Endothelial cell of umbilical vein (primary cell): ENCODE measurements at regions of chr1 and their contacts with region 1.

Region 1: GRCh38 chr1:186985889-186986491 is 157.2 kb downstream of the PLA2G4A start:
- DNase-seq: peak; percentile 90
- H3K4me3 ChIP-seq: no peak overlapping the region
- H3K27ac ChIP-seq: peak overlapping the region; percentile 76
- H3K4me1 ChIP-seq: peaks cover 16% of the 10 kb centered on the region
- H3K27me3 ChIP-seq: no peaks in the 10 kb centered on the region
- CTCF ChIP-seq: peak; percentile 45 to 48
- POLR2A ChIP-seq: no peak

Region 2: GRCh38 chr1:186482661-186483255 is 503.2 kb before region 1 on chr1:
- CTCF ChIA-PET with region 1: interaction called, 19 read pairs
- POLR2A ChIA-PET with region 1: no interaction called
- dilution Hi-C with region 1: no loop called
- intact Hi-C with region 1: loop called (anchors 1 kb)
- DNase-seq: peak; percentile 90
- H3K4me3 ChIP-seq: no peak overlapping the region
- H3K27ac ChIP-seq: peak overlapping the region; percentile 19
- H3K4me1 ChIP-seq: peaks cover 16% of the 10 kb centered on the region
- H3K27me3 ChIP-seq: no peaks in the 10 kb centered on the region
- CTCF ChIP-seq: peak; percentile 81 to 87
- POLR2A ChIP-seq: no peak

Region 3: GRCh38 chr1:186722711-186723309 is 263.2 kb before region 1 on chr1:
- CTCF ChIA-PET with region 1: interaction called, 15 read pairs
- POLR2A ChIA-PET with region 1: no interaction called
- dilution Hi-C with region 1: no loop called
- intact Hi-C with region 1: loop called (anchors 1 kb)
- DNase-seq: peak; percentile 52
- H3K4me3 ChIP-seq: no peak overlapping the region
- H3K27ac ChIP-seq: no peak overlapping the region
- H3K4me1 ChIP-seq: no peaks in the 10 kb centered on the region
- H3K27me3 ChIP-seq: no peaks in the 10 kb centered on the region
- CTCF ChIP-seq: peak; percentile 55 to 56
- POLR2A ChIP-seq: no peak

Region 4: DNA sequence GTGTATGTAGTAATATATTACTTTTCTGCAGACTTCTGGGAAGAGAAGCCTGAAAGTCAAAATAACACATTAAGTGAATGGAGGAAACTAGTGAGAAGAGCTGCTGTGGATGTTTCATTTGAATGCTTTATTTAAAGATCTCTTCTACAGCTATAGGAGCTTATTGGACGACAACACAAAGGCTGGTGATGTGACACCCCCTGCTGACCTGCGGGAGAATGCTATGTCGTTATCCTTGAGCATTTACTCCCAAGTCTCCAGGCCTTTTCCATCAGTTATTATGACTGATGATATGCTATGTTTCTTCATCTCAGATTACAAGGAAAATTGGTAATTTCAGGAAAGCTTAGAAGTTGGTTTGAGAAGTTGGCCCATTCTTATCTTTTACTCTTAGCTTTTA is 179.5 kb before region 1 on chr1:
- CTCF ChIA-PET with region 1: interaction called, 12 read pairs
- POLR2A ChIA-PET with region 1: no interaction called
- dilution Hi-C with region 1: no loop called
- intact Hi-C with region 1: no loop called
- DNase-seq: peak; percentile 73
- H3K4me3 ChIP-seq: no peak overlapping the region
- H3K27ac ChIP-seq: no peak overlapping the region
- H3K4me1 ChIP-seq: no peaks in the 10 kb centered on the region
- H3K27me3 ChIP-seq: no peaks in the 10 kb centered on the region
- CTCF ChIP-seq: peak; percentile 32 to 49
- POLR2A ChIP-seq: no peak

Region 5: DNA sequence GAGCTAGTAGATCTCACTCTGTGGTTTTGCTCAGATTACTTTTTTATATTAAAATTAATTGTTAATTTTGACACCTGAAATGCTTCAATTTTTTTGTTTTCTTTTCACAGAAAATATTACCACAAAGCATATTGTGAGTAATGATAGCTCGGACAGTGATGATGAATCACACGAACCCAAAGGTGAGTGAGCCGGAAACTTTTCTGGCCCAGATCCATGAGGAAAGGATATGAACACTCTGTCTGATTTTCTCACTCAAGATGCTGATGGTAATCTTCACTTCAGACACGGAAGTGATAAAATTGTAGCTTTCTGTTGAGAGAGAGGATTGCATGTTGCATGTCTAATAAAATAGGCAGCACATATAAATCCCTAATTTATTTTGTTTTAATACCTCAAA is 35.4 kb before region 1 on chr1:
- CTCF ChIA-PET with region 1: interaction called, 3 read pairs
- POLR2A ChIA-PET with region 1: no interaction called
- dilution Hi-C with region 1: no loop called
- intact Hi-C with region 1: loop called (anchors 5 kb)
- DNase-seq: peak; percentile 89
- H3K4me3 ChIP-seq: no peak overlapping the region
- H3K27ac ChIP-seq: peak overlapping the region; percentile 97
- H3K4me1 ChIP-seq: peaks cover 58% of the 10 kb centered on the region
- H3K27me3 ChIP-seq: no peaks in the 10 kb centered on the region
- CTCF ChIP-seq: no peak
- POLR2A ChIP-seq: no peak

Region 6: GRCh38 chr1:187143783-187144182 is 157.8 kb after region 1 on chr1:
- CTCF ChIA-PET with region 1: no interaction called
- POLR2A ChIA-PET with region 1: no interaction called
- dilution Hi-C with region 1: no loop called
- intact Hi-C with region 1: no loop called
- DNase-seq: no peak
- H3K4me3 ChIP-seq: no peak overlapping the region
- H3K27ac ChIP-seq: no peak overlapping the region
- H3K4me1 ChIP-seq: no peaks in the 10 kb centered on the region
- H3K27me3 ChIP-seq: no peaks in the 10 kb centered on the region
- CTCF ChIP-seq: no peak
- POLR2A ChIP-seq: no peak